Endothelial cell of umbilical vein (primary cell): ENCODE measurements at regions of chr2 and their contacts with region 1.

Region 1: DNA sequence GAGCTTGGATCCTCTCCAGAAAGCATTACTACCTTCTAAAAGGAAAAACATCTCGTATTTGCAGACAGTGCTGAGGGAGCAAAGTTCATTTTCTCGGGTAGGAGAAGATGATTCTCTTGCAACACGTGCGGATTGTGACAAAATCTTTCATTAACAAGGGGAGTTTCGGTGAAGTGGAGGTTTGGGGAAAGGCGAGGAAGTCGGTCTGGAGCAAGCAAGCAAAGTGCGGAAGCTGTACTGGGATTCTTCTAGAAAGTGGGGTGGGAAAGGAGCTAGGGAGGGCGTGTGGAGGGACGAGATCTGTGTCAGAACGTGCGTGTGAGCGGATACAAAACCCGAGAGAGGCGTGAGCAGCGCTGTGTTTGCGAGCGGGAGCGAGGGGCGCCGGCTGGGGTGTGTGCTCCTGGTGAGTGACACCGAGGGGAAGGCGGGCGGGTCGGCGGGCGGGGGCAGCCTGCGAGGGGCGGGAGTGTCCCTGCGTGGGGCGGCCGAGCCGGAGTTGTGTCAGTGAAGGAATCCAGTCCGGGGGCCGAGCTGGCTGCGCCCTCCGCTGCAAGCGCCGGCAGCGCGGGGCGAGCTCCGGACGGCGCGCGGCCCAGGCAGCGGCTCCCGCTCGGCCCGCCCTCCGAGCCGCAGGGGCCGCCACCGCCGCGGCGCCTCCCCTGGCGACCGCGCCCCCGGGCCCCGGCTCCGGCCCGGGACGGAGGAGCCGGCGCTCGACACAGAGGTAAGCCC is at the start of gene SPATS2L:
- DNase-seq: peak; percentile 71
- H3K4me3 ChIP-seq: peak within 1 kb of the TSS; percentile 83 to 95 (median 93)
- H3K27ac ChIP-seq: peak within 1 kb of the TSS; percentile 39
- H3K4me1 ChIP-seq: peaks cover 14% of the 10 kb centered on the region
- H3K27me3 ChIP-seq: no peaks in the 10 kb centered on the region
- CTCF ChIP-seq: no peak
- POLR2A ChIP-seq: peak; percentile 74
- total RNA-seq, gene SPATS2L: 63.8 and 72.9 TPM in 2 replicates

Region 2: DNA sequence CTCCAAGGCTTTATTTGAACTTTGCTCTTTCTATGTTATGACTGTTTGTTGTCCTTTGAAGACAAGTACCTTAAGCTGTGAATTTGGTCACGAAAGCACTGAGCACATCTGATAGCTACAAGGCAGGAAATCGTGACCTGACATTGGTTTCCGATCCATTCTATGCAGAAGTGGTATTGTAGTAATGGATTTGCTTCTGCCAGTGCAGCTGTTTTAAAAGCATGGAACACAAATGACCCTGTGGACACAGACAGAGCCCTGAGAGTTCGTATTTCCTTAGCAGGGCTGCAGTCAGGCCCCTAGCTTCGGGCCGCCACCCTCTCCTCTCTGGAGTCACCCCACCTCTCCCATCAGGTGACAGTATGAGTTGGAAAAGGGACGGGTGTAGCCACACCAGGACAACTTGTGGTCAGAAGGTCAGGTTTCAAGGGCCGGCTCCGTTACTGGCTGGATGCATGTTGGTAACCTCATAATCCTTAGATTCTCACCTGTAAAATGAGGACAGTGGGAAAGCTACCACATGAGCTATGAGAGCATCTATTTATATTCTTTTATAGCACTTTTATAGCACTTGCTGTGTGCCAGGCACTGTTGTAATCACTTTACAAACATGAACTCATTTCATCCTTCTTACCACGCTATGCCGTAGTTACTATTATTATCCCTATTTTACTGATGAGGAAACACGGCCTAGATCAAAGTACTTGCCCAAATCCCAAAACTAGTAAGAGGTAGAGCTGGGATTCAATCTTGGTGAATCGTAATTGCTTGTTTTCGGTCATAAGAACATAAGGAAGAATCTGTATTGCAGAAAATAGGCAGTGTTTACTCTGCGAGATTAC is 70.4 kb after region 1 on chr2:
- CTCF ChIA-PET with region 1: interaction called, 7 read pairs
- POLR2A ChIA-PET with region 1: no interaction called
- dilution Hi-C with region 1: no loop called
- intact Hi-C with region 1: loop called (anchors 2 kb)
- DNase-seq: peak; percentile 89
- H3K4me3 ChIP-seq: no peak overlapping the region
- H3K27ac ChIP-seq: peak overlapping the region; percentile 66
- H3K4me1 ChIP-seq: peaks cover 61% of the 10 kb centered on the region
- H3K27me3 ChIP-seq: no peaks in the 10 kb centered on the region
- CTCF ChIP-seq: no peak
- POLR2A ChIP-seq: no peak

Region 3: DNA sequence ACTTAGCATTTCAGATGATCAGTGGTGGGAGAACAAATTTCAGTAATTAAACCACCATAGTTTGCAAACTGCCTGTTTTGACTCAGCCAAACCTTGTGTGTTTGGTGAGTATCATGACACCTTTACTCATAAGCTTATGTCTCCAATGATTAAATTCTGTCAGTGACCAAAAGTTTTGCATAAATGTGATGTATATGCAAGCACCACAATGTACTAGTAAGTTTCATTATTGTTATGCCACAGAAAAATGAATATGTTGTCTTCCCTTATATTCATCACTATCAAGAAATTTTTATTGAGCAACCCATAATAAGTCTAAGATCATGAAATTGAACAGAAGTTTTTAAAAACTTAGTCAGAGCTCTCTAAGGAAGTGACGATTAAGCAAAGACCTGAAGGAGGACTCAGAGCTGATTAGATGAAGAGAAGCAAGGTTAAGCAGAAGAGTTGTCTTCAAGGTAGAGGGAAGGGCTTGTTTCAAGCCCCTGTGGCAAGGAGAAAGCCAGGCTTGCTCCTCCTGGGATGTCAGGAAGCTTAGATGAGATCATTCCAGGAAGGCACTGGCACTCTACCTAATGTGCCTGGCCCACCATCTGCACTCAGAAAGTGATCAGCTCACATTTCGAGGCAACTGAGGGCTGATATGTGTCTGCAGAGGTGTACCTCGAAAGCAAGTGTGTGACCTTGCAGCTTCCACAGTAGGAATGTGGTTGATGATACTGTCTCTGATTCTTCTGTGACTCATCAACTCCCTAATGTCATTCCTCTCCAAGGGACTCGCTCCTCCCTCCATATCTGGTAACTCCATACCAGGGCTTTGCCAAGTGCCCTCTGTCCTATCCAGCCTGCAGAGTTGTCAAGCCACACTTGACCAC is 148.8 kb after region 1 on chr2:
- CTCF ChIA-PET with region 1: interaction called, 3 read pairs
- POLR2A ChIA-PET with region 1: no interaction called
- dilution Hi-C with region 1: no loop called
- intact Hi-C with region 1: loop called (anchors 5 kb)
- DNase-seq: no peak
- H3K4me3 ChIP-seq: no peak overlapping the region
- H3K27ac ChIP-seq: no peak overlapping the region
- H3K4me1 ChIP-seq: peaks cover 6% of the 10 kb centered on the region
- H3K27me3 ChIP-seq: no peaks in the 10 kb centered on the region
- CTCF ChIP-seq: no peak
- POLR2A ChIP-seq: no peak